Right cardiac atrium (tissue), 5 donors: ENCODE measurements at regions of chrX and their contacts with region 1.

Region 1: DNA sequence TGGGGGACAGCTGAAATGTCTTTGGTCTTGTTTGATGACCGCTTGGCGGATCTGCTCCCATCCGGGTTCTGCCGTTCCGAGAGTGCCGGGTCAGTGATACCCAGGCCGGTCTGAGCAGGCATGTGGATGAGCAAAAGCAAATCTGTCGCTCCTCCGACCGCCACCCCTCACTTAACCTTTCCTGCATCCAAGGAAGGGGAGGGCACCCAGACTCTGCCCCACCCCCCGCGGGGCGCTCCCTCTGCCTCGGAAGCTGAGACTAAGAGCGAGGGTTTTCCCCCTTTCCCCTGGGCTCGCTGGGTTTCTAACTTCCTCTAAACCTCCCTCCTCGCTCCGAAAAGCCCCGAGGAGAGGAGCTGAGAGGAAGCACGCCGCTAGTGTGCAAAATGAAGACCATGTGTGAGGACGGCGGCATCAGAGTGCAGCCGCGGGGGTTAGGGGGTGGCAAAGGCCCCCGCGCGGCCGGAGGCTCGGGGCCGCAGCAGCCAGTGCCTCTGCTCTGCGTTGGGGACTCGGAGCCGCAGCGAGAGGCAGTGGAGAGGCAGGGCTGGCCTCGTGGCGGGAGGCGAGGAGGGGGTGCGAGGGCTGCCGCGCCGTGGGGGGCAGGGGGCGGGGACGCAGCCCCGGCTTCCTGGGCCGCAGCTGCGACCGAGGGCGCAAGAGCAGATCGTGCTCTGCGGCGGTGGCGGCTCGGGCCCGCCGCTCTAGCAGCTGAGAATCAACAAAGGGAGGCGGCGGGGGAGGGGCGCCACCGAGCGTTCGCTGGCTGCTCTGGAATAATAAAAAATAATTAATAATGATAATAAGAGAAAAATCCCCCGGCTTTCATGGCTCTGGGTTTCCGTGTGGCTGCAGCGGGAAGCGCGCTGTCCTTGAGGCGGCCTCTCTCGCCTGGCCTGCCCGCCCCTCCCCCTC is 55.8 kb upstream of the BCOR start:
- DNase-seq: peak; percentile 50 to 86 (median 84)
- ATAC-seq: peak; percentile 0 to 17
- H3K4me3 ChIP-seq: peak overlapping the region; percentile 63
- H3K27ac ChIP-seq: peak overlapping the region; percentile 83
- H3K4me1 ChIP-seq: peaks cover 6% of the 10 kb centered on the region
- H3K27me3 ChIP-seq: no peaks in the 10 kb centered on the region

Region 2: DNA sequence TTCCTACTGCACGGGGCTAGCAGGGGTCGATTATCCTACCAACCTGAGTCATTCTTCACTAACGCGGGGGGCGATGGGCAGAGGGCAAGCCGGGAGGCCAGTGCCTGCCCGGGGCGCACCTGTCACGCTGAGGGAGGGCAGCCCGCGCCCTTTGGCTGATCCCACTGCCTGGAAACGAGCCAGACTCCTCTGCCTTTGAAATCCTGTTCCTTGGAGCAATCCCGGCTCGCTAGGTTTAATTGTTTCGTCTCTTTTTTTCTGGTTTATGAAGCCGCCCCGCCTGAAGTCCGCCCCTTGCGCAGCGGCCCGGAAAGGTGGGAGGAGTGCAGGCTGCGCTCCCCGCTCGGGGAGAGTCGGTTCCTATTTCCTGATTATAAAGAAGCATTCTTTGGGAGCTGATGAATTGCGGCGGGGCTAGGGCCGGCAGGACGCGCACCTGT is 540.1 kb before region 1 on chrX:
- intact Hi-C with region 1: no loop called
- DNase-seq: peak; percentile 11 to 68 (median 58)
- ATAC-seq: peak in 1 of 2 donors; percentile 64
- H3K4me3 ChIP-seq: peak overlapping the region; percentile 42
- H3K27ac ChIP-seq: no peak overlapping the region
- H3K4me1 ChIP-seq: peaks cover 2% of the 10 kb centered on the region
- H3K27me3 ChIP-seq: no peaks in the 10 kb centered on the region

Region 3: GRCh38 chrX:39705299-39705698 is 448.3 kb before region 1 on chrX:
- intact Hi-C with region 1: no loop called
- DNase-seq: peak; percentile 79 to 85 (median 80)
- ATAC-seq: peak; percentile 70 to 92
- H3K4me3 ChIP-seq: no peak overlapping the region
- H3K27ac ChIP-seq: no peak overlapping the region
- H3K4me1 ChIP-seq: no peaks in the 10 kb centered on the region
- H3K27me3 ChIP-seq: no peaks in the 10 kb centered on the region

Region 4: DNA sequence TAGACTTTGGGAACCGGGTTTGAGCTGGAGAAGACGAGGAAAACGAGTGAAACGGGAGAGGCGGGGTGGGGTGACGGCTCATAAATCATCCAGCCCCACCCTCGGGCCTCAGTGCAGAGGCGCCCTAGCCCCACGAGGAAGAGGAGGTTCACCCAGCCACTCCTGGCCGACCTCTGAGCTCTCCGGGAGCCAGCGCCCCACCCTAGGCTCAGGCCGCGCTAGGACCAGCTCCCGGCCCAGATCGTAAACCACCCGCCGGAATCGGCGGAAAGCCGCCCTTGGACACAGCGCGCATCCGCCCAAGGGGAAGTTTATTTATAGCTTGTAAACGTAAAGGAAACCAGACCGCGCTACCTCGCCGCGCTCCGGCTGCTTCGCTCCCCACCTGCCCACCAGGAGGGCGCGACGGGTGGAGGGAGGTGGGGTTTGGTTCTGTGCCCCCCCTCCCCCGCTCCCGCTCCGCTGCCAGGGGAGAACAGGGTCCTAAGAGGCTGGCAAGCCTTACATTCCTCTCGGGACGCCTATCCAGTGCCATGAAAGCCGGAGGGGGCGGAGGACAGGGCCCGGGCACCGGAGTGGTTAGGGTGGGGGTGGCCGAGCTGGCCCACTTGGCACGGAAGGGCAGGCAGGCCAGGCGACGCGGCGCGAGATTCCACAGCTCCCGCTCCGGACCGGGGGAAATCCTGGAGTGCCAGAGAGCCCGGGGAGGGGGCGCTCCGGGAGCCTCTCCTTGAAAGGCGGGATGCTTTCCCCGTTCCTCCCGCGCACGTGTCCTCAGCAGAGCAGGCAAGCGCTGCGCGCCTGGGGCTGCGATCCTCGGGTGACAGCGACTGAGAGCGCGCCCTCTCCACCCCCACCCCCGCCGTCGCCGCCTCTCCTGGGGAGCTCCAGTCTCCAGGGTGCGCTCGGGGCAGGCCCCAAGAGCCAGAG is 140.1 kb before region 1 on chrX:
- intact Hi-C with region 1: loop called in 1 of 4 experiments (anchors 10 kb)
- DNase-seq: peak; percentile 81 to 90 (median 87)
- ATAC-seq: peak; percentile 70 to 76
- H3K4me3 ChIP-seq: peak overlapping the region; percentile 29
- H3K27ac ChIP-seq: peak overlapping the region; percentile 96
- H3K4me1 ChIP-seq: peaks cover 8% of the 10 kb centered on the region
- H3K27me3 ChIP-seq: no peaks in the 10 kb centered on the region

Region 5: GRCh38 chrX:40097497-40098263 is 55.9 kb before region 1 on chrX and contains the start of gene BCOR:
- intact Hi-C with region 1: loop called in 3 of 4 experiments (anchors 5 to 10 kb)
- DNase-seq: peak; percentile 78 to 92 (median 89)
- ATAC-seq: peak; percentile 51 to 62
- H3K4me3 ChIP-seq: peak within 1 kb of the TSS; percentile 97
- H3K27ac ChIP-seq: peak within 1 kb of the TSS; percentile 96
- H3K4me1 ChIP-seq: no peaks in the 10 kb centered on the region
- H3K27me3 ChIP-seq: no peaks in the 10 kb centered on the region
- total RNA-seq, gene BCOR: 18.1 to 30.1 (median 20.5) TPM

Region 6: GRCh38 chrX:40108959-40109287 is 44.7 kb before region 1 on chrX:
- intact Hi-C with region 1: loop called in 3 of 4 experiments (anchors 5 to 10 kb)
- DNase-seq: peak; percentile 85 to 93 (median 92)
- ATAC-seq: peak; percentile 75 to 78
- H3K4me3 ChIP-seq: peak overlapping the region; percentile 84
- H3K27ac ChIP-seq: peak overlapping the region; percentile 89
- H3K4me1 ChIP-seq: no peaks in the 10 kb centered on the region
- H3K27me3 ChIP-seq: no peaks in the 10 kb centered on the region

Region 7: GRCh38 chrX:40496728-40497127 is 343.1 kb after region 1 on chrX:
- intact Hi-C with region 1: no loop called
- DNase-seq: peak in 2 of 3 donors; percentile 20 to 58
- ATAC-seq: peak; percentile 49 to 71
- H3K4me3 ChIP-seq: no peak overlapping the region
- H3K27ac ChIP-seq: no peak overlapping the region
- H3K4me1 ChIP-seq: peaks cover 2% of the 10 kb centered on the region
- H3K27me3 ChIP-seq: no peaks in the 10 kb centered on the region